ENCODE measurements at regions of chr11 and their contacts with region 1.

Region 1: GRCh38 chr11:61947486-61948210 is 2.5 kb upstream of the BEST1 start:
- DNase-seq: peak; percentile 60 to 86
- H3K4me3 ChIP-seq: no peak overlapping the region
- H3K27ac ChIP-seq: no peak overlapping the region
- H3K4me1 ChIP-seq: no peaks in the 10 kb centered on the region; a peak in 1 of 7 replicates
- H3K27me3 ChIP-seq: no peaks in the 10 kb centered on the region
- CTCF ChIP-seq: peak; percentile 89 to 99 (median 98)
- EP300 ChIP-seq: no peak
- POLR2A ChIP-seq: no peak
- RAD21 ChIP-seq: peak; percentile 100

Region 2: DNA sequence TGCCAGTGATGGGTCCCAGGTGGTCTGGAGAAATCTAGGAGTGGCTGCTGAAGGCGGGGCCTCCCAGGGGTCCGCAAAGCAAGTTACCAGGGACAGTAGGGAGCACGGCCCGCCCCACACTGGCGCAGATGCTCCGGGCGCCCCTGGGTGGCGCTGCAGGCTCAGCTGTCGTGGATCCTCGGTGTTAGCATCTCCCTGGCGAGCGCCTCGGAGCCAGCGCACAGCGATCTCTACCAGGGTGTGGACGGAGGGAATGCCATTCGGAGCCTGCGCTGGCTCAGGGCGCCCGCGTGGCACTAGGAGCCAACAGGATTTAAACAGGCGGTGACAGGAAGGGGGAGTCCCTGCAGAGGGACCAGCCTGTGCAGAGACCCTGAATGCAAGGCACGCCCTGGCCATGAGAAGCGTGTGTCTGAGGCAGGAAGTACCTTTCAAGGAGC is 76.5 kb before region 1 on chr11:
- CTCF ChIA-PET with region 1: interaction called, 34 read pairs
- POLR2A ChIA-PET with region 1: interaction called, 9 read pairs
- DNase-seq: peak; percentile 73 to 94
- H3K4me3 ChIP-seq: peak overlapping the region in 2 of 4 experiments; percentile 22 to 30; a peak in 5 of 8 replicates
- H3K27ac ChIP-seq: no peak overlapping the region
- H3K4me1 ChIP-seq: peaks cover 4 to 14% (median 4%) of the 10 kb centered on the region in 4 experiments; a peak in 6 of 7 replicates
- H3K27me3 ChIP-seq: peaks cover 0 to 11% (median 8%) of the 10 kb centered on the region in 4 experiments; a peak in 5 of 7 replicates
- CTCF ChIP-seq: peak in 2 of 3 experiments; percentile 94 to 97; a peak in 3 of 4 replicates
- EP300 ChIP-seq: 0 out of 3 replicates have a peak, but pooled peaks of 1 of the 2 experiments have one; percentile 27
- POLR2A ChIP-seq: no peak
- RAD21 ChIP-seq: peak; percentile 97 to 98

Region 3: GRCh38 chr11:61912530-61912898 is 35.1 kb before region 1 on chr11:
- CTCF ChIA-PET with region 1: interaction called, 79 read pairs
- POLR2A ChIA-PET with region 1: interaction called, 137 read pairs
- DNase-seq: no peak
- H3K4me3 ChIP-seq: no peak overlapping the region
- H3K27ac ChIP-seq: no peak overlapping the region
- H3K4me1 ChIP-seq: peaks cover 0 to 21% (median 10%) of the 10 kb centered on the region in 4 experiments; a peak in 6 of 7 replicates
- H3K27me3 ChIP-seq: peaks cover 0 to 9% (median 6%) of the 10 kb centered on the region in 4 experiments; a peak in 4 of 7 replicates
- CTCF ChIP-seq: no peak
- EP300 ChIP-seq: no peak
- POLR2A ChIP-seq: no peak
- RAD21 ChIP-seq: no peak

Region 4: GRCh38 chr11:61961570-61962212 is 14.0 kb after region 1 on chr11:
- CTCF ChIA-PET with region 1: interaction called, 38 read pairs
- POLR2A ChIA-PET with region 1: interaction called, 458 read pairs
- DNase-seq: no peak
- H3K4me3 ChIP-seq: no peak overlapping the region
- H3K27ac ChIP-seq: no peak overlapping the region
- H3K4me1 ChIP-seq: no peaks in the 10 kb centered on the region
- H3K27me3 ChIP-seq: peaks cover 0 to 1% (median 0%) of the 10 kb centered on the region in 4 experiments; a peak in 2 of 7 replicates
- CTCF ChIP-seq: no peak
- EP300 ChIP-seq: no peak
- POLR2A ChIP-seq: no peak
- RAD21 ChIP-seq: no peak

Region 5: DNA sequence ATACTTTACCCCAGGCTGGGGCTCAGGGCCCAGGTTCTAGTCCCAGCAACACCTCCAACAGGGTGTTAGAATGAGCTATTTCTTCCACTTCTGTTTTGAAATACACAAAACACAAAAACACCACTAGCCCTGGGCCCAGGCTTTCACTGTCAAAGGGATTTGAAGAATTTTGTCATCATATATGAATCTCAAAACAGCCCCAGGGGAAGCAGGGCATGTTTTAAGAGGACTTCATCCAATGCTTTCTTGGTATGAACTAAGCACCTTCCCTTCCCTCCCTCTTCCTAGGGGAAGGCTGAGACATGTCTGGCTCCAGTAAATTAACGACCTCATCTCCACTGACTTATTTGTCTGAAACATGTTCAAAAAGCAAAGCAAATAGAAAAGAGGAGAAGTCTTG is 100.4 kb after region 1 on chr11:
- CTCF ChIA-PET with region 1: interaction called, 14 read pairs
- POLR2A ChIA-PET with region 1: interaction called, 3 read pairs
- DNase-seq: no peak
- H3K4me3 ChIP-seq: no peak overlapping the region
- H3K27ac ChIP-seq: no peak overlapping the region
- H3K4me1 ChIP-seq: no peaks in the 10 kb centered on the region
- H3K27me3 ChIP-seq: no peaks in the 10 kb centered on the region
- CTCF ChIP-seq: no peak
- EP300 ChIP-seq: no peak
- POLR2A ChIP-seq: no peak
- RAD21 ChIP-seq: no peak

Region 6: DNA sequence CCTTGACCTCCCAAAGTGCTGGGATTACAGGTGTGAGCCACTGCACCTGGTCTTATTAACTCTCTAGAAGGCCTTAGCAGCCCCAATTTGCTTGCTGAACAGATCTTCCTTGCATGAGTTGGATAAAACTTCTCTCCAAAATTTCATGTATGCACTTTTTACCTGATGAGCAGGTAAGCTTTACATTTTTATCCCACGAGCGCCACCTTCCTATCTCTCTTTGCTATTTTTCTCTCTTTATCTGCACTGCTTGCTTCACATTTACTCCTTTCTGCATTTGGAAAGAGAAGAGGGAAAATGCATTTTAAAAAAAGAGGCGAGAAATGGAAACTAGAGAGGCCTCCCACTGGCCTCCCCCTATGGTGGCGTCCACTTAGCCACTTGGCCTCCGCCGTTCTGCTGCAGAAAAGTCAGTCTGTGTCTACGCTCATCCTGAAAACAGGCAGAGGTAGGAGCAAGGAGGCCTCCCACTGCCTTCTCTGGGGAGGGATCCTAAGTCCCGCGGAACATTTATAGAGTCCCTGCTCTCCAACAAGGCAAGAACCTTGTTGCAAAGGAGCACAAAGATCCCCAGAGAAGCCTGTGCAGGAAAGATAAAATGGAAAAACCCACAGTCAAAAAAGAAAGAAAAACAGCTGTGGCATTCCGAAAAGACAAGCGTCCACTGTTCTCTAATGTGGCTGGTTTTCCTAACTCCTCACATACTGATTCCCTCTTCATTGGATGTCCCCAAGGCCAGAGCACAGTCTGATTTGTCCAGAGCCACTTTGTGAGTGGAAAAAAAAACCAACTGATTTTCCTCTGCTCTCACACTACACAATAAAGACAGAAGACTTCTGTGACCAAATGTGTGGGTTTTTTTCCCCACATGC is 113.9 kb after region 1 on chr11:
- CTCF ChIA-PET with region 1: interaction called, 19 read pairs
- POLR2A ChIA-PET with region 1: interaction called, 3 read pairs
- DNase-seq: no peak
- H3K4me3 ChIP-seq: no peak overlapping the region
- H3K27ac ChIP-seq: no peak overlapping the region
- H3K4me1 ChIP-seq: no peaks in the 10 kb centered on the region
- H3K27me3 ChIP-seq: no peaks in the 10 kb centered on the region
- CTCF ChIP-seq: peak in 1 of 3 experiments; percentile 28; a peak in 1 of 4 replicates
- EP300 ChIP-seq: no peak
- POLR2A ChIP-seq: no peak
- RAD21 ChIP-seq: peak; percentile 48 to 58